ENCODE measurements at regions of chr2 and their contacts with region 1.

Region 1: GRCh38 chr2:98649135-98649991 is 41.0 kb downstream of the UNC50 start:
- DNase-seq: peak; percentile 72 to 91 (median 79)
- ATAC-seq: peak; percentile 92
- H3K4me3 ChIP-seq: no peak overlapping the region
- H3K4me3 Mint-ChIP-seq: peak overlapping the region; percentile 36
- H3K27ac ChIP-seq: peak overlapping the region in 1 of 2 donors; percentile 55
- H3K27ac Mint-ChIP-seq: peak overlapping the region; percentile 92
- H3K4me1 ChIP-seq: peaks cover 17% of the 10 kb centered on the region
- H3K4me1 Mint-ChIP-seq: peaks cover 62% of the 10 kb centered on the region
- H3K27me3 ChIP-seq: no peaks in the 10 kb centered on the region
- H3K27me3 Mint-ChIP-seq: no peaks in the 10 kb centered on the region
- CTCF ChIP-seq: peak; percentile 98

Region 2: DNA sequence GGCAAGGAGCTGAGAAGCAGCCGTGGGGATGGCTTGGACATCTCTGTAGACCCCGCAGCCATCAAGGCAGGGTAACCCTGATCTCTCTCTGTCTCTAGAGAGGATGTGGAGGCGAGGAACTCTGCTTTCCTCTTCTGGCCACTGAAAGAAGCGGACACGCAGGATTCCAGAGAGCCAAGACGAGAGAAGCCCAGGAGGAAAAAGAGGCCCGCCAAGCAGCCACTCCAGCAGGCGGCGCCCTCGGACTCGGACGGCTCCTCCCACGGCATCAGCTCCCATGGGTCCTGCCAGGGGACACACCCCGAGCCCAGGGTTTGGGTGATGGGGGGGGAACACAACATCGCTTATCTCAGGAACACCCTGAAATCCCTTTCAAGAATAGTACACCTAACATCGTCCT is 337.6 kb before region 1 on chr2:
- CTCF ChIA-PET with region 1: no interaction called
- POLR2A ChIA-PET with region 1: no interaction called
- intact Hi-C with region 1: no loop called
- DNase-seq: no peak
- ATAC-seq: no peak
- H3K4me3 ChIP-seq: no peak overlapping the region
- H3K4me3 Mint-ChIP-seq: no peak overlapping the region
- H3K27ac ChIP-seq: no peak overlapping the region
- H3K27ac Mint-ChIP-seq: no peak overlapping the region
- H3K4me1 ChIP-seq: no peaks in the 10 kb centered on the region
- H3K4me1 Mint-ChIP-seq: no peaks in the 10 kb centered on the region
- H3K27me3 ChIP-seq: peaks cover 4 to 11% of the 10 kb centered on the region in 2 experiments
- H3K27me3 Mint-ChIP-seq: peaks cover 61% of the 10 kb centered on the region
- CTCF ChIP-seq: no peak

Region 3: GRCh38 chr2:98664327-98664726 is 15.0 kb after region 1 on chr2:
- CTCF ChIA-PET with region 1: interaction called, 17 read pairs
- POLR2A ChIA-PET with region 1: interaction called, 15 read pairs
- intact Hi-C with region 1: loop called in 1 of 2 experiments (anchors 2 kb)
- DNase-seq: peak in 11 of 14 experiments; percentile 39 to 85 (median 52)
- ATAC-seq: peak; percentile 78
- H3K4me3 ChIP-seq: peak overlapping the region; percentile 44
- H3K4me3 Mint-ChIP-seq: peak overlapping the region; percentile 87
- H3K27ac ChIP-seq: peak overlapping the region; percentile 58 to 76
- H3K27ac Mint-ChIP-seq: peak overlapping the region; percentile 92
- H3K4me1 ChIP-seq: peaks cover 44% of the 10 kb centered on the region
- H3K4me1 Mint-ChIP-seq: peaks cover 78% of the 10 kb centered on the region
- H3K27me3 ChIP-seq: no peaks in the 10 kb centered on the region
- H3K27me3 Mint-ChIP-seq: no peaks in the 10 kb centered on the region
- CTCF ChIP-seq: no peak

Region 4: DNA sequence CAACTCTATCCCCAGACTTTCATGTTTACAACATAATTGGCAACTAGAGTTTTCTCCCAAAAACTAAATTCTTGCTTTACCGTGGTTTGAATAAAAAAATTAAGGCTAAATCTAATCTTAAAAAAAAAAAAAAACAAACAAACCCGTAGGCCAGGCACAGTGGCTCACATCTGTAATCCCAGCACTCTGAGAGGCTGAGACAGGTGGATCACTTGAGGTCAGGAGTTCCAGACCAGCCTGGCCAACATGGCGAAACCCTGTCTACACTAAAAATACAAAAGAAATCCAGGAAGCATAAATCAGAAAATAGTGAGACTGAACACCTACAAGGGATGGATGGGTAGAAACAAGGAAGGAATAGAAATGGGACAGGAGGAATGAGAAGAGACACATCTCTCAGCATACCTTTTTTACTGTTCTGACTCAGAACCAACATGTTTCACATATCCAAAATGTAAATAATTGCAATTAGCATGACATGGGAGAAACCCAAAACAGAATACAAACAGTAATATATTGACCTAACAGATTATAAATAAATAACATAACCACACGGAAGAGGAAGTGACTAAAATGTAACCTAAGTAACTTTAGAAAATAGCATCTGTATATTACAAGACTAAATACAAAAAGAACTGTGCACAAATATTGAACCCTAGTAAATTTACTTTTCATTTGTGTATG is 64.1 kb after region 1 on chr2:
- CTCF ChIA-PET with region 1: interaction called, 11 read pairs
- POLR2A ChIA-PET with region 1: interaction called, 5 read pairs
- intact Hi-C with region 1: no loop called
- DNase-seq: no peak
- ATAC-seq: no peak
- H3K4me3 ChIP-seq: no peak overlapping the region
- H3K4me3 Mint-ChIP-seq: peak overlapping the region; percentile 62
- H3K27ac ChIP-seq: no peak overlapping the region
- H3K27ac Mint-ChIP-seq: peak overlapping the region; percentile 72
- H3K4me1 ChIP-seq: peaks cover 81% of the 10 kb centered on the region
- H3K4me1 Mint-ChIP-seq: peaks cover 96% of the 10 kb centered on the region
- H3K27me3 ChIP-seq: no peaks in the 10 kb centered on the region
- H3K27me3 Mint-ChIP-seq: no peaks in the 10 kb centered on the region
- CTCF ChIP-seq: no peak

Region 5: GRCh38 chr2:98771721-98772524 is 122.6 kb after region 1 on chr2:
- CTCF ChIA-PET with region 1: interaction called, 25 read pairs
- POLR2A ChIA-PET with region 1: interaction called, 30 read pairs
- intact Hi-C with region 1: loop called (anchors 2 kb)
- DNase-seq: peak; percentile 45 to 92 (median 64)
- ATAC-seq: peak; percentile 70
- H3K4me3 ChIP-seq: peak overlapping the region; percentile 60
- H3K4me3 Mint-ChIP-seq: peak overlapping the region; percentile 94
- H3K27ac ChIP-seq: peak overlapping the region; percentile 86 to 90
- H3K27ac Mint-ChIP-seq: peak overlapping the region; percentile 96
- H3K4me1 ChIP-seq: peaks cover 86% of the 10 kb centered on the region
- H3K4me1 Mint-ChIP-seq: peaks cover 84% of the 10 kb centered on the region
- H3K27me3 ChIP-seq: no peaks in the 10 kb centered on the region
- H3K27me3 Mint-ChIP-seq: no peaks in the 10 kb centered on the region
- CTCF ChIP-seq: no peak

Region 6: GRCh38 chr2:98835831-98836385 is 186.5 kb after region 1 on chr2:
- CTCF ChIA-PET with region 1: interaction called, 67 read pairs
- POLR2A ChIA-PET with region 1: interaction called, 13 read pairs
- intact Hi-C with region 1: loop called (anchors 1 kb)
- DNase-seq: peak; percentile 36 to 88 (median 51)
- ATAC-seq: peak; percentile 85
- H3K4me3 ChIP-seq: no peak overlapping the region
- H3K4me3 Mint-ChIP-seq: peak overlapping the region; percentile 57
- H3K27ac ChIP-seq: peak overlapping the region; percentile 27 to 48
- H3K27ac Mint-ChIP-seq: peak overlapping the region; percentile 94
- H3K4me1 ChIP-seq: peaks cover 42% of the 10 kb centered on the region
- H3K4me1 Mint-ChIP-seq: peaks cover 46% of the 10 kb centered on the region
- H3K27me3 ChIP-seq: no peaks in the 10 kb centered on the region
- H3K27me3 Mint-ChIP-seq: no peaks in the 10 kb centered on the region
- CTCF ChIP-seq: no peak